Thyroid gland (tissue), 4 donors: ENCODE measurements at regions of chr15 and their contacts with region 1.

Region 1: DNA sequence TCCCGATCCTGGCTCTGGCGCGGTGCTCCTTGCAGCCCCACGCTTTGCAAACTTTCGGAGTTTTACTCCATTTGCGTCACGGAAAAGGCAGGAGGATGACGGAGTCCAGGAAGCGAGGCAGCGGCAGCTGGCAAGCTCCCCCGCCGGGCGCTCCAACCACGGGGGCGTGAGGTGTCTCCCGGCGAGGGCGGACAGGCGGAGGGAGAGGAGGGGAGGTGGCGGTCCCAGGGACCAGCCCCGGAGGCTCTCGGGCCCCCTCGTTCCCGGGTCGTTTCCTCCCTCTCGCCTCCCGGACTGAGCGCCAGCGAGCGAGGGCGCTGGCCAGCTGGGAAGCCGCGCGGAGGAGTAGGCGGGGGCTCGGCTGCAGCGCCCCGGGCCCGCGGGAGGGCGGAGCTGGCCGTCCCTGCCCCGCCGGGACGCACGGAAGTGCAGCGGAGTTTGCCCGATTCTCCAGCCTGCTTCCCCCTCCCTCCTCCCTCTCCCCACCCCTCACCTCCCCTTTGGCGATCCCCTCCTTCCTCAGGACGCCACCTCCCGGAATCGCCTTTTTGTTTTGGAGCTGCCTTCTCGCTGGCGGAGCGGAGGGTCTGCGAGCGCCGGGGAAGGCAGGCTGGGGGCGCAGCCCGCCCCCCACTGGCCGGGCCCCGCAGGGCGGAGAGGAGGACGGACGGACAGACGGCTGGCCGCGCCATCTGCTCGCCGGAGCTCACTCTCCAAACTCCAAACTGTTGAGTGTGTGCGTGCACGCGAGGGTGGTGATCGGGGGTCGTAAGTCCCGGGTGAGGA is at the start of gene SNX33:
- DNase-seq: peak; percentile 81 to 82
- H3K4me3 ChIP-seq: peak within 1 kb of the TSS; percentile 83 to 90 (median 87)
- H3K27ac ChIP-seq: peak within 1 kb of the TSS; percentile 55 to 96 (median 82)
- H3K4me1 ChIP-seq: peaks cover 41 to 53% of the 10 kb centered on the region in 2 donors
- H3K27me3 ChIP-seq: no peaks in the 10 kb centered on the region
- CTCF ChIP-seq: peak in 4 of 6 experiments; percentile 31 to 47 (median 42)
- POLR2A ChIP-seq: peak; percentile 68 to 89
- total RNA-seq, gene SNX33: 22.8 to 28.7 (median 26.5) TPM

Region 2: GRCh38 chr15:75367913-75368688 is 279.5 kb before region 1 on chr15 and contains the start of gene MAN2C1:
- intact Hi-C with region 1: loop called (anchors 10 kb)
- DNase-seq: peak; percentile 98
- H3K4me3 ChIP-seq: peak within 1 kb of the TSS; percentile 58 to 88 (median 87)
- H3K27ac ChIP-seq: peak within 1 kb of the TSS; percentile 88 to 95 (median 91)
- H3K4me1 ChIP-seq: peaks cover 13 to 18% of the 10 kb centered on the region in 2 donors
- H3K27me3 ChIP-seq: no peaks in the 10 kb centered on the region
- CTCF ChIP-seq: peak in 5 of 6 experiments; percentile 10 to 88 (median 78)
- POLR2A ChIP-seq: peak; percentile 46 to 90
- total RNA-seq, gene MAN2C1: 200 to 357 (median 226) TPM

Region 3: GRCh38 chr15:75551081-75551480 is 96.5 kb before region 1 on chr15:
- intact Hi-C with region 1: no loop called
- DNase-seq: no peak
- H3K4me3 ChIP-seq: no peak overlapping the region
- H3K27ac ChIP-seq: no peak overlapping the region
- H3K4me1 ChIP-seq: peaks cover 4% of the 10 kb centered on the region in 2 donors
- H3K27me3 ChIP-seq: no peaks in the 10 kb centered on the region
- CTCF ChIP-seq: no peak
- POLR2A ChIP-seq: no peak